ENCODE measurements at regions of chr1 and their contacts with region 1.

Region 1: DNA sequence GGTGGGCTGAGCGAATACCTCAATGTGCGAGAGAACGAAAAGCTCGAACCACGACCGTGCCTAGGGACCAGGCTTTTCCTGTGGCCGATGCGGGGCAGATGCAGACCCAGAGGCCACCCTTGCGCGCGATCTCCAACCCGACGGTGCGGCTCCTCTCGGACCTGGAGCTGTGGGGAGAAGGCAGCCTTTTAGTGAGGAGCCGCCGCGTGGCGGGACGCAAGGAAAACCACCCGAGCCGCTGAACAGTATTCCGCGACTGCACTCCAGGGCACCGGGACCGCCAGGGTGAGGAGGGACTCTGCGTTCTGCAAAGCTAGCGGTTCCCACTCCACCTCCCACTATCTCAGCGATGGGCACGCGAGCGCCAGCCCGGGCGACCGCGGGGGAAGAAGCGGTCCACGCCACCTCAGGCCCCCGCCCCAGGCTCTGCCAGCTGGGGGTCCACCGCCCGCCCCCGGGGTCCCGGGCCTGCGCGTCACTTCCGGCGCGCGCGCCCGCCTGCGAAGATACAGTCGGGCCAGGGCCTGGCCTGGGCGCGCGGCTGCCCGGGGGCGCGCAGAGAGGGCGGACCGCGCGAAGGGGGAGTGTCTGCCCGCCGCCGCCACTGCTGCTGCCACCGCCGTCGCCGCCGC is 66.5 kb upstream of the PRKACB start:
- DNase-seq: peak; percentile 73
- H3K4me3 Mint-ChIP-seq: peak overlapping the region; percentile 78
- H3K27ac Mint-ChIP-seq: peak overlapping the region; percentile 59
- H3K4me1 Mint-ChIP-seq: peaks cover 12% of the 10 kb centered on the region
- H3K27me3 Mint-ChIP-seq: peaks cover 10% of the 10 kb centered on the region

Region 2: DNA sequence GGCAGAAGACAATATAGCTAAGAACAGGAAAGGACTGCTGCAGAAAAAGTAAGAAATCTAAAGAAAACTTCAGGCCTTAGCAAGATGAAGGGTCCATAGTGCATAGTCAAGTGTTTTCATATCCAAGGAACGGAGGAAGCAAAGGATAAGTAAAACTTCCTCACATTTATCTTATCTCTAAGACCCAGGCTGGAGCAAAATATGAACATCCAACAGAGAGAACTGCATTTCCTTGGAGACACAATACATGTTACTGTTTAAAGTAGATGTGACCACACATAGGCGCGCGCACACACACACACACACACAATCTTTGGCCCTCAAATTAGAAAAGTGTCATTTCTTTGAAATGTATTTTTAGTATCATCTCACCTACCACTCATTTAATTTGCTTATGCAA is 145.3 kb before region 1 on chr1:
- CTCF ChIA-PET with region 1: no interaction called
- POLR2A ChIA-PET with region 1: no interaction called
- DNase-seq: no peak
- H3K4me3 Mint-ChIP-seq: no peak overlapping the region
- H3K27ac Mint-ChIP-seq: no peak overlapping the region
- H3K4me1 Mint-ChIP-seq: no peaks in the 10 kb centered on the region
- H3K27me3 Mint-ChIP-seq: peaks cover 12% of the 10 kb centered on the region

Region 3: GRCh38 chr1:84090447-84091245 is 13.1 kb after region 1 on chr1:
- CTCF ChIA-PET with region 1: interaction called, 8 read pairs
- POLR2A ChIA-PET with region 1: interaction called, 11 read pairs
- DNase-seq: no peak
- H3K4me3 Mint-ChIP-seq: peak overlapping the region; percentile 50
- H3K27ac Mint-ChIP-seq: peak overlapping the region; percentile 24
- H3K4me1 Mint-ChIP-seq: peaks cover 23% of the 10 kb centered on the region
- H3K27me3 Mint-ChIP-seq: no peaks in the 10 kb centered on the region